Activated naive CD4-positive, alpha-beta T cell treated with anti-CD3 and anti-CD28 coated beads for 36 hours (primary cell): ENCODE measurements at regions of chr5 and their contacts with region 1.

Region 1: DNA sequence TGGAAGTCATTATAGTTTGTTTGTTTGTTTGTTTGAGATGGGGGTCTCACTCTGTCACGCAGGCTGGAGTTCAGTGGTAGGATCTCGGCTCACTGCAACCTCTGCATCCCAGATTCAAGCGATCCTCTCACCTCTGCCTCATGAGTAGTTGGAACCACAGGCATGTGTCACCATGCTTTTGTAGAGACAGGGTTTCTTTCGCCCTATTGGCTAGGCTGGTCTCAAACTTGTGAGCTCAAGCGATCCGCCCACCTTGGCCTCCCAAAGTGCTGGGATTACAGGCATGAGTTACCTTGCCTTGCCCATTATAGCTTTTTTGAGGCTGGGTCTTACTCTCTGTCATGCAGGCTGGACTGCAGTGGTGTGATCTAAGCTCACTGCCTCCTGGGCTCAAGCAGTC is 28.8 kb downstream of the NSD1 start:
- DNase-seq: no peak
- H3K4me3 Mint-ChIP-seq: no peak overlapping the region
- H3K27ac Mint-ChIP-seq: no peak overlapping the region
- H3K4me1 Mint-ChIP-seq: peaks cover 13% of the 10 kb centered on the region
- H3K27me3 Mint-ChIP-seq: no peaks in the 10 kb centered on the region

Region 2: DNA sequence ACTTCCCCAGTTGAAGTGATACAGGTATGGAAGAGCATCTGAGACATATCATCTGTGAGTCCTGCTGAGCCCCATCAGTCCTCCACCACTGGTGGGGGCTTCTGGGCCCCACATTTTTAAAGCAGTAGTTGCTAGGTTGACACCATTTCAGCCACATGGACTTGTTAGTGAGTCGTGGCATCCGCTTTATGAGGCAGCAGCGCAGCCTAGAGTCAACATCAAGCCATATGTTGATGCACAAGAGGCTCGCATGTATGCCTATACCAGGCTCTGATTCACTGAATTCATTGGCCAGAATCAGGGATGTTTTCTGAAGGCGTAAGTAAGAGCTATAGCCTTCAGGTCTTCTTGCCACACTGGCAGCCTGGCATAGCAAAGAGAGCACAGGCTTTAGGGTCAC is 113.1 kb before region 1 on chr5:
- CTCF ChIA-PET with region 1: no interaction called
- intact Hi-C with region 1: no loop called
- DNase-seq: peak; percentile 22
- H3K4me3 Mint-ChIP-seq: no peak overlapping the region
- H3K27ac Mint-ChIP-seq: no peak overlapping the region
- H3K4me1 Mint-ChIP-seq: no peaks in the 10 kb centered on the region
- H3K27me3 Mint-ChIP-seq: no peaks in the 10 kb centered on the region

Region 3: DNA sequence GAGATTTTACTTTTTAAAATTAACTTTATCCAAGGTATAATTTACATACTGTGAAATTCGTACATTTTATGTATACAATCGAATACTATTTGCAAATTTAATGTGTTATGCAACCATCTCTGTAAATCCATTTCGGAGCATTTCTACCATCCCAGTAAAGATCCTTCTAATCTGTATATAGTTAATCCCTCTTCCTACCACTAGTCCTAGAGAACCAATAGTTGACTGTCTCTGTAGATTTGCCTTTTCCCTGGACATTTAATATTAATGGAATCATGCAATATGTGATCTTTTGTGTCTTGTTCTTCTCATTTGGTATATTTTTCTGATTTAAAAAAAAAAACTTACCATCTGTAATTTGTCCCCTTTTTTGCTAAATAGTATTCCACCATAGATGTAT is 66.4 kb after region 1 on chr5:
- CTCF ChIA-PET with region 1: no interaction called
- intact Hi-C with region 1: loop called (anchors 10 kb)
- DNase-seq: no peak
- H3K4me3 Mint-ChIP-seq: no peak overlapping the region
- H3K27ac Mint-ChIP-seq: no peak overlapping the region
- H3K4me1 Mint-ChIP-seq: peaks cover 12% of the 10 kb centered on the region
- H3K27me3 Mint-ChIP-seq: no peaks in the 10 kb centered on the region

Region 4: DNA sequence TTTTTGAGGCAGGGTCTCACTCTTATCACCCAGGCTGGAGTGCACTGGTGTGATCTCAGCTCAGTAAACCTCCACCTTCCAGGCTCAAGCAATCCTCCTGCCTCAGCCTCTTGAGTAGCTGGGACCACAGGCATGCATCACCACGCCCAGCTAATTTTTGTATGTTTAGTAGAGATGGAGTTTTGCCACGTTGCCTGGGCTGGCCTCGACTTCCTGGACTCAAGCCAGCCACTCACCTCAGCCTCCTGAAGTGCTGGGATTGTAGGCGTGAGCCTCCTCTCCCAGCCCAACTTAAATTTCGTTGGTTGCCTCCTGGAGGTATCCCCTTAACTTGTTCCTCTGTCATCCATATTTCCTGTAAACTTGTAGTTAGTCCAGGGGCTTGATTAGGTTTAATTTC is 93.9 kb after region 1 on chr5:
- CTCF ChIA-PET with region 1: no interaction called
- intact Hi-C with region 1: no loop called
- DNase-seq: no peak
- H3K4me3 Mint-ChIP-seq: no peak overlapping the region
- H3K27ac Mint-ChIP-seq: peak overlapping the region; percentile 42
- H3K4me1 Mint-ChIP-seq: no peaks in the 10 kb centered on the region
- H3K27me3 Mint-ChIP-seq: no peaks in the 10 kb centered on the region